OCI-LY7 (cell line): ENCODE measurements at regions of chr5 and their contacts with region 1.

Region 1: GRCh38 chr5:39074016-39074886 is at the start of gene RICTOR:
- DNase-seq: peak; percentile 92
- H3K4me3 ChIP-seq: peak within 1 kb of the TSS; percentile 96
- H3K27ac ChIP-seq: peak within 1 kb of the TSS; percentile 81
- H3K4me1 ChIP-seq: peaks cover 39% of the 10 kb centered on the region
- CTCF ChIP-seq: no peak
- total RNA-seq, gene RICTOR: 10.9 and 13.1 TPM in 2 replicates

Region 2: GRCh38 chr5:38453506-38453905 is 620.7 kb before region 1 on chr5:
- CTCF ChIA-PET with region 1: no interaction called
- POLR2A ChIA-PET with region 1: no interaction called
- intact Hi-C with region 1: loop called (anchors 10 kb)
- DNase-seq: peak; percentile 91
- H3K4me3 ChIP-seq: no peak overlapping the region
- H3K27ac ChIP-seq: no peak overlapping the region
- H3K4me1 ChIP-seq: peaks cover 21% of the 10 kb centered on the region
- CTCF ChIP-seq: no peak

Region 3: GRCh38 chr5:38831909-38832308 is 242.3 kb before region 1 on chr5:
- CTCF ChIA-PET with region 1: no interaction called
- POLR2A ChIA-PET with region 1: no interaction called
- intact Hi-C with region 1: loop called (anchors 5 kb)
- DNase-seq: peak; percentile 40
- H3K4me3 ChIP-seq: no peak overlapping the region
- H3K27ac ChIP-seq: no peak overlapping the region
- H3K4me1 ChIP-seq: no peaks in the 10 kb centered on the region
- CTCF ChIP-seq: peak; percentile 78